ENCODE measurements at regions of chr11 and their contacts with region 1.

Region 1: DNA sequence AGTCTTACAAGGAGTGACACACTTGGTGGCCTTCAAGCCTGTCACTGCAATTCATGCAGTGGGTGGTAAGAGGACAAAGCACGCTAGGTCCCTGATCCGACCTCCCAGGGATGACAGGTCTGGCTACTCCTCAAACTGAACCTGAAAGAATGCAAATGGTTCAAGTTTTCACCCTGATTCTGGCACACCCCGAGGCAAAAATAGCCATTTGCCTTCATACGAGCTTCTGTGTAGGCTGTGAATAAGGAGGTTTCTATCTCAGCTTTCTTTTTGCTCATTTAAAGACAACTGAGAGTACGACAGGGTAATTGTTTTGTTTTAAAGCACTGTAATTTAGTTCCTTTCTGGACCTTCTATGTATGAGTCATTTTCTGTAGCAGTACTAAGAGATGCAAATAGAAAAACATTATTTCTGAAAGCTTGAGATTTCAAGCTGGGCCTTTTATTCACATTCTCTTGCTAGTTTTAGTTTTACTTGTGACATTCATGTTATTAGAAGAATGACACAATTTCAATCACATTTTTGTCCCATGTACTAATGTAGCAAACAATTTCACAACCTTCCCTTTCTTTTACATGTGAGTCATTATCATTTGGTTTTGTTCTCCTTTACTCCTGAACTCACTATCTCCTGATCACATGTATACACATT is 56.6 kb upstream of the FDX1 start:
- DNase-seq: no peak
- H3K4me3 ChIP-seq: no peak overlapping the region
- H3K27ac ChIP-seq: peak overlapping the region in 1 of 2 donors; percentile 66
- H3K4me1 ChIP-seq: peaks cover 9% of the 10 kb centered on the region
- H3K27me3 ChIP-seq: no peaks in the 10 kb centered on the region
- CTCF ChIP-seq: no peak
- POLR2A ChIP-seq: no peak

Region 2: GRCh38 chr11:110200241-110200640 is 172.9 kb before region 1 on chr11:
- intact Hi-C with region 1: loop called (anchors 5 kb)
- DNase-seq: no peak
- H3K4me3 ChIP-seq: no peak overlapping the region
- H3K27ac ChIP-seq: no peak overlapping the region
- H3K4me1 ChIP-seq: no peaks in the 10 kb centered on the region
- H3K27me3 ChIP-seq: no peaks in the 10 kb centered on the region
- CTCF ChIP-seq: no peak
- POLR2A ChIP-seq: no peak